ENCODE measurements at regions of chr16 and their contacts with region 1.

Region 1: GRCh38 chr16:21646721-21647561 is 5.5 kb downstream of the IGSF6 start:
- DNase-seq: no peak
- H3K4me3 ChIP-seq: no peak overlapping the region
- CTCF ChIP-seq: no peak

Region 2: GRCh38 chr16:21167360-21167759 is 479.6 kb before region 1 on chr16:
- in situ Hi-C with region 1: no loop called
- DNase-seq: peak; percentile 90
- H3K4me3 ChIP-seq: no peak overlapping the region
- CTCF ChIP-seq: no peak

Region 3: DNA sequence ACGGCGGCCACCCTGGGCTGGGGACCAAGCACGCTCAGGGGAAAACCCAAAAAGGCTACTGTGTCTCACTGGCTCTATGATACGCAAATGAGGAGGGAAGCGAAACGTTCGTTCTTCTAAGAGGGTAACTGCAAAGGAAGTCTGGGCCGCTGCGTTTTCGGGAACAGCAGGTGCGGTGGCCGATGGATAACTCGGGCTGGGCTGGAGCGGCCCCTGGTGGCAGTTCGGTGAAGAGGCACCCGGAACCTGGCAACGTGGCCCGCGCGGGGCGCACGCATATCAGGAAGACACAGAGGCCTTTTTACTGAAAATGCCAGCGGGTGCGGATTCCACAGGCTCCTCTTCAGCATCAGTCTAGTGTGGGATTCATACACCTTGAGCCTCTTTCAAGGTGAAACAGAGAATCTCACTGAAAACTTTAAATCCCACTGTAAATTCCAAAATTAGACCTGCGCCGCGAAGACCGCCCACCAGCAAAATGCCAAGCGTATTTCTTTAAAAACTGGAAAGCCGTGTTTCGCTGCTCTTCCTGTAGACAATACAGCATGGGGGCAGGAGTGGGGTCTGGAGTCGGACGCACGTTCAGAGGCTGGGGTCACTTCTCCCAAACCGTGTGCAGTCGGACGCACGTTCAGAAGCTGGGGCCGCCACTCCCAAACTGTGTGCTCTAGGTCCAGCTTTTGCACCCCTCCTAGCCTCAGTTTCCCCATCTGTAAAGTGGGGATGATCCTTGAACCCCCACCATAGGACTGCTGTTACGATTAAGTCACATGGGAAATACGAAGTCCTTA is 92.0 kb before region 1 on chr16:
- in situ Hi-C with region 1: no loop called
- DNase-seq: peak; percentile 47
- H3K4me3 ChIP-seq: no peak overlapping the region
- CTCF ChIP-seq: peak; percentile 98

Region 4: DNA sequence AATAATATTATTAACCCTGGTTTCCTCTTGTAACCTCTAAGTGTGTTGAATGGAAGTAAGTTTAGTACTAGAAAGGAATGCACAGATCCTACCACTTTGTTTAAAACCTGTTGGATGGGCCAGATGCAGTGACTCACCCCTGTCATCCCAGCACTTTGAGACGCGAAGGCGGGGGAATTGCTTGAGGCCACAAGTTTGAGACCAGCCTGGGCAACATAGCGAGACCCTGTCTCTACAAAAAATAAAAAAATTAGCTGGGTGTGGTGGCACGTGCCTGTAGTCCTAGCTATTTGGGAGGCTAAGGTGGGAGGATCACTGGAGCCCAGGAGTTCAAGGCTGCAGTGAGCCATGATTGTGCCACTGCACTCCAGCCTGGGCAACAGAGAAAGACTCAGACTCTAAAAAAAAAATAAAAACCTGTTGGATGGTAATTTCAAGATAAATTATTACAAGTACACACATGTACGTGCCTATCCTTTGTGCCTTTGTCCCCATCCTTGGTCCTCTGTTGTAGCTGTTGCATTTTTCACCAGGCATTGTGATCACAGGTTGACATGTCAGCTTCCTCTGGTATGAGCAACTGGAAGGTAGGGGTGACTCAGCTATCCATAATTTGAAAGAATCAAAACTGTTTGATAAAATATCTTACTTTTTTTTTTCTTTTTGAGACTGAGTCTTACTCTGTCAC is 78.3 kb before region 1 on chr16:
- in situ Hi-C with region 1: no loop called
- DNase-seq: no peak
- H3K4me3 ChIP-seq: no peak overlapping the region
- CTCF ChIP-seq: no peak

Region 5: DNA sequence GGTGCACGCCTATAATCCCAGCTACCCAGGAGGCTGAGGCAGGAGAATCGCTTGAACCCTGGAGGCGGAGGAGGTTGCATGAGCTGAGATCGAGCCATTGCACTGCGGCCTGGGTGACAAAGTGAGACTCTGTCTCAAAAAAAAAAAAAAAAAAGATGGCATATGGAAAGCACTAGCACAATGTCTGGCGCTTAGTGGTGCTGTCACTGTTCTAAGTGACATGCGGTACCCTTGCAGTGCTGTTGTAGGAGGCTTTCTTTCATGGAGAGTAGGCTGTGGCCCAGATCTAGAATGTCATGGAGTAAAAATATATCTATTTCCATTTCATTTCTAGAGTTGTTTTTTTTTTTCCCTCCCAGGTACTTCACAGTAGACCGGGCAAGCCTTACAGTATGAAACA is 62.1 kb before region 1 on chr16:
- in situ Hi-C with region 1: loop called (anchors 5 kb)
- DNase-seq: no peak
- H3K4me3 ChIP-seq: no peak overlapping the region
- CTCF ChIP-seq: no peak

Region 6: GRCh38 chr16:21708533-21709115 is 61.7 kb after region 1 on chr16:
- in situ Hi-C with region 1: loop called (anchors 5 kb)
- DNase-seq: peak; percentile 44
- H3K4me3 ChIP-seq: no peak overlapping the region
- CTCF ChIP-seq: peak; percentile 84

Region 7: GRCh38 chr16:22161999-22162655 is 515.2 kb after region 1 on chr16 and contains the start of gene SDR42E2:
- in situ Hi-C with region 1: no loop called
- DNase-seq: no peak
- H3K4me3 ChIP-seq: no peak within 1 kb of the TSS
- CTCF ChIP-seq: no peak

Measured in astrocyte of the cerebellum (primary cell).